Activated CD4-positive, alpha-beta T cell treated with anti-CD3 and anti-CD28 coated beads, Interleukin-2, amount 10 ng/mL, durations not matched to agents 7 days and 5 days (primary cell): ENCODE measurements at regions of chr19 and their contacts with region 1.

Region 1: GRCh38 chr19:48713864-48714758 is 5.4 kb downstream of the MAMSTR start:
- DNase-seq: peak; percentile 99
- H3K4me3 Mint-ChIP-seq: peak overlapping the region; percentile 75
- H3K27ac Mint-ChIP-seq: peak overlapping the region; percentile 92
- H3K4me1 Mint-ChIP-seq: peaks cover 27% of the 10 kb centered on the region
- H3K27me3 Mint-ChIP-seq: no peaks in the 10 kb centered on the region

Region 2: DNA sequence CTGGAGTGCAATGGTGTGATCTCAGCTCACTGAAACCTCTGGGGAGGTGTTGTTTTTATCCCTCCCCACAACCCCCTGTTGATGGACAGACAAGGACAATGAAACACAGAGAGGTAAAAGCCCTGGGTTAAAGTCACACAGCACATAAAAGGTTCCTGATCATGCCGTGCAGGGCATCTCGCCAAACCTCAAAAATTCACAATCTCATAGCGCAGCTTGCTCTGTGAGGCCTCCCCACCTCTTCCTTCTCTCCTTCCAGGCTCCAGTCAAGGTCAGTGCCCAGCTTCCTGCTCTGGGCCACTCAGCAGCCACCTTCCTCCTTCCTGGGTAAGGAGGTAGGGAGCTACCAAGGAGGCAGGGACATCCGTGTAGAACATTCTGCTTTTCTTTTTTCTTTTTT is 16.1 kb before region 1 on chr19:
- CTCF ChIA-PET with region 1: interaction called, 10 read pairs
- POLR2A ChIA-PET with region 1: interaction called, 3 read pairs
- DNase-seq: no peak
- H3K4me3 Mint-ChIP-seq: no peak overlapping the region
- H3K27ac Mint-ChIP-seq: no peak overlapping the region
- H3K4me1 Mint-ChIP-seq: peaks cover 8% of the 10 kb centered on the region
- H3K27me3 Mint-ChIP-seq: peaks cover 14% of the 10 kb centered on the region